HEK293 (cell line): ENCODE measurements at regions of chr5 and their contacts with region 1.

Region 1: DNA sequence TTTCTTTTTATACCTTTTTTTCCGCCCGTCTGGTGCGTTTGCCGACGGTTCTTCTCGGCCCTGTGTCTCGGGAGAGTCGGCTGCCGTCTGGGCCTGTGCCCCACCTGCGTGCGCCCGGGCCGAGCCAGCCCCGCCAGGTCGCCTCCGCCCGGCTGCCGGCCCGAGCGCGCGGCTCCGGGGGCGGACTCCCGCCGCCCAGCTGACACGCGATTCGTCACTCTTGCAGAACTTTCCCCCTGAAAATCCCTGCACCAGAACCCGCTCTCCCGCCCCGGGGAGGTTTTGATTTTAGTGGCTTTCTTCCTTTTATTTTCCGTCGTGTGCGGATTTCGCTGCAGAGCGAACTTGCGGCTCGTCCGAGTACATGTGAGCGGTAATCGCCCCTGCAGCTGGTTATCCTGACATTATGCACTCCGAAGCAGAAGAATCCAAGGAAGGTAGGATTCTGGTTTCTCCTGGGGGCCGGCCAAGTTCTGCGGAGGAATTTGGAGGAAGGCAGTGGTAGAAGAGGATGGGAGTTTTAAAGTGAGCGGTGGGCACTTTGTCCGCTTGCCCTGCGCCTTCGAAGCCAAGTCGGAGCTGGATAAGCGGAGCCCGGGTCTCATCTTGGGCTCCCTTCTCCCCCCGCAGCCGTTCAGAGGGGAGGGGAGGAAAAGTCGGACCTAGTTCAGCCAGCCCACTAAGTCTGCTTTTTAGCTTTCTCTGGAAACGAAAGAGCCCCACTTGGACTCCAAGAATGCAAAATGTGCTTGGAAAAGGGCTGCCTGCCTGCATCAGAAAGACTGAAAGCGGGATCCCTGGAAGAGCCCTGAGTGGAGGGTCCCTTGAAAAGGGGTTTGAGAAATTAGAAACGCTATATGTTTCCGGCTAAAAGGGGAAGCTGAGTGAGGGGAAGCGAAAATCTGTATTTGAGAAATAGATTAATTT is at the start of gene TNFAIP8:
- H3K4me3 ChIP-seq: peak within 1 kb of the TSS; percentile 35
- H3K27ac ChIP-seq: peak within 1 kb of the TSS; percentile 78
- H3K4me1 ChIP-seq: peaks cover 40% of the 10 kb centered on the region
- CTCF ChIP-seq: no peak

Region 2: DNA sequence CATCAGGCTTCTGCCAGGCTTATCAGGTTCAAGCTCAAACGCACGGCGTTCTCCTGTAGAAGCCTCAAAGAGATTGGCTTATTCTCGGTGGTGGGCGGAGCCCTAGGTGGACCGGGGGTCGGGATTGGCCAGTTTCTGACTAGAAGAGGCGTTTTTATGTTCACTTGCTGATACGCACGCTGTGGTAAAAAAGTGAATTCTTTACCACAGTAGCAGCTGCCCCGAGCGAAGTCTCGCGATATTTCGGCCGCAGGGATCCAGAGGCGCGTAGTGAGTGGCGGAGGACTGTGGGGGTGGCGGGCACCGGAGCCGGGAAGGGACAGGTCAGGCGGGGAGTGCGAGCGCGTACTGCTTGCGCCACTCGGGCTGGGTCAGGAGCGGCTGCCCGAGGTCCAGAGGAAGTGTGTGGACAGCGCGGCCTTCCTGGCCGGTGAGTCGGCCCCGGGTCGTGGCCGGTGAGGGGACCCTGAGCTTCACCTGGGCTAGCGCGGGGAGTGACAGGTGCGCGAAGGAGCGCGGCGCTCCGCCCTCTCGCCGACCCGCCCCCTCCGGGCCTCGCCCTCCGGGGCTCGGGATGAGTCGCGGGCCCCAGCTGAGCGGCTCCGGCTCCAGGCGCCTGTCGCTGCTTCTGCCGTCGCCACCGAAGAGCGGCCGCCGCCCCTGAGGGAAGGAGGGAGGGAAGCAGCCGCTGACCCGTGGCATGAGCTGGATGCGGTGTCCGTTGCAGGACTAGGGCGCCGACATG is 284.9 kb before region 1 on chr5 and contains the start of gene DMXL1:
- CTCF ChIA-PET with region 1: no interaction called
- POLR2A ChIA-PET with region 1: interaction called, 10 read pairs
- H3K4me3 ChIP-seq: peak within 1 kb of the TSS; percentile 88
- H3K27ac ChIP-seq: peak within 1 kb of the TSS; percentile 88
- H3K4me1 ChIP-seq: peaks cover 8% of the 10 kb centered on the region
- CTCF ChIP-seq: 0 out of 2 replicates have a peak, but pooled peaks have one; percentile 7